ENCODE measurements at regions of chr11 and their contacts with region 1.

Region 1: DNA sequence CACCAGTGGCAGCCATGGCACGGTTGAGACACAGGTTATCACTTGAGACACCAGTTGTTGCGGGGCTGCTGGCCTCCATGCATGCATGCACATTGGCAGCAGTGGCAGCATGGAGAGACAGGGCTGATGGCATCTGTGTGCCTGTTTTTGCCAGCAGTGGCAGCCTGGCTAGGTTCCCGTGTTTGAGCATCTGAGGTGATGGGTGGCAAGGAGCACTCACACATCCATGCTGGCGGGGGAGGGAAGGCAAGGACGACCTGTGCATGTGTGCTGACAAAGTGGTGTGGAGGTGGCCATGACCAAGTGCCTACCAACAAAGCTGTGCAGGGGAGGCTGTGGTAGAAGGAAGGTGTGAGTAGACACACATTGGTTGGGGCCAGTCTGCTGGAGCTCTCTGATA is 133.5 kb downstream of the CNTN5 start:
- DNase-seq: no peak
- ATAC-seq: no peak
- H3K4me3 ChIP-seq: no peak overlapping the region
- H3K27ac ChIP-seq: no peak overlapping the region
- H3K4me1 ChIP-seq: no peaks in the 10 kb centered on the region
- H3K27me3 ChIP-seq: no peaks in the 10 kb centered on the region
- CTCF ChIP-seq: no peak

Region 2: DNA sequence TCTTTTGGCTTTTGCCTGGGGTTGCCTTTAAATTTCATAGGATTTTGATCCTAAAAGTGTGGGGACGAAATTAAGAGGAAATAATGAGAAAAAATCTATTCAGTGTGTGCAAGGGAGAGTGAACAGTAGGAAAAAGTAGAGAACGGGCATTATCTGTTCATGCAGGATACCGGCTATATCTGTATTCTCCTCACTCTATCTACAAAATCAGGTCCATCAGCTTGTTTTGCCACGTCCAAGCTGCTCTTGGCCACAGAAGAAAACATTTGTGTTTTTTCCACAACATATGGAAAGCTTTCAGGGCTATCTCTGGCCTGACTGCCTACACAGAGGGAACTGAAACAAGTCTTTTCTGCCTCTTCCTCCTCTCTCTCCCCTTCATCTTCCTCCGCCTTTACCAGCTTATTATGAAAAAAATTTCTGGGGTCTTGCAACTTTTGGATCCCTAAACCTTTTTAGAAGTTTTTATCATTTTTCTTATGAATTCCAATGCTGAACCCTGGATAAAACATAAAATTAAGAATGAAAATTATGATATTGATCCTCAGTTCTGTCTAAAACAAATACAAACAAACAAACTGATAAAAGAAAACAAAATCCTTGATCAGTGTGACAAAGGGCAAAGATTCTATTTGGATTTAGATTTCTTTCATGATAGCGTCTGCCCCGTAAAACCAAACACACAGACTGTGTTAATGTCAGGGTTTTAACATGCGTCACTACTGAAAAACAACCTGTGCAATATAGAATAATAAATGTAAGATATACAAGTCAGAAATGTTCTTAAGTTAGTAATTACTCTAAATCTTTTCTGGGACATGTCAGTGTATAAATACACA is 86.1 kb after region 1 on chr11:
- CTCF ChIA-PET with region 1: no interaction called
- POLR2A ChIA-PET with region 1: interaction called, 13 read pairs
- in situ Hi-C with region 1: no loop called
- intact Hi-C with region 1: no loop called
- DNase-seq: no peak
- ATAC-seq: no peak
- H3K4me3 ChIP-seq: no peak overlapping the region
- H3K27ac ChIP-seq: no peak overlapping the region
- H3K4me1 ChIP-seq: no peaks in the 10 kb centered on the region
- H3K27me3 ChIP-seq: no peaks in the 10 kb centered on the region
- CTCF ChIP-seq: no peak

Measured in Panc1 (cell line).